ENCODE measurements at regions of chr19 and their contacts with region 1.

Region 1: GRCh38 chr19:1211443-1212234 is 6.1 kb downstream of the STK11 start:
- DNase-seq: no peak
- H3K27ac ChIP-seq: peak overlapping the region; percentile 98
- CTCF ChIP-seq: no peak

Region 2: DNA sequence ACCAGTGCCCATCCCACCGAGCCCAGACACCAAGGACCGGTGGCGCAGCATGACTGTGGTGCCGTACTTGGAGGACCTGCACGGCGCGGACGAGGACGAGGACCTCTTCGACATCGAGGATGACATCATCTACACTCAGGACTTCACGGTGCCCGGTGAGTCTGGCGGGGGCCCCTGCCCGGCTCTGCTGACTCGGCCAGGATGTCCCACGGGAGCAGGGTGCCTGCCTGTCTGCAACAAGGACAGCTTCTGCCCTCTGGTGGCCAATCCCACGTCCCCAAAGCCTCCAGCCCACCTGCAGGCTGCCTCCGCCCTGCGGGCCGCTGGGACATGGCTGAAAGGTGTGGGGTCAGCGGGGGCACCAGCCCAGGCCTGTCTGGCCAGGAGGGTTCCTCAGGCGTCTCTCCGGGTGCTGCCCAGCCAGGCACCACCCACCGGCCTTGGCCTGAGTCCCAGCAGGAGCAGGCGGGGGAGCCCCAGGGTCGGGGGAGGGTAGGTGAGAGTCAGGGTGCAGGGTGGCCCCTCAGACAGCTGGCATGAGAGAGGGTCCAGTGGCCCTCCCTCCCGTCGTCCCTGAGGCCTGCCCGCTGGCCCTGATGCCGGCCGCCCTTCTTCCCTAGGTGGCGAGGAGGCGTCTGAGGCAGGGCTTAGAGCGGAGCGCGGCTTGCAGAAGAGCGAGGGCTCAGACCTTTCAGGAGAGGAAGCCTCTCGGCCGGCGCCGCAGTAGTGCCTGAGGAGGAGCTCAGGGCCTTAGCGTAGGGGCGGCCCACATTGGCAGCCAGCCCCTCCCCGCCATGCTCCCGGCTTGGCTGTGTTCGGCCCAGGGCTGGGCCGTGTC is 11.6 kb after region 1 on chr19:
- CTCF ChIA-PET with region 1: interaction called, 6 read pairs
- POLR2A ChIA-PET with region 1: interaction called, 12 read pairs
- DNase-seq: no peak
- H3K27ac ChIP-seq: peak overlapping the region; percentile 98
- CTCF ChIP-seq: peak; percentile 54